ENCODE measurements at regions of chr1 and their contacts with region 1.

Region 1: GRCh38 chr1:200048218-200048617 is 20.7 kb downstream of the NR5A2 start:
- DNase-seq: no peak
- ATAC-seq: no peak
- H3K4me3 ChIP-seq: no peak overlapping the region
- H3K27ac ChIP-seq: no peak overlapping the region
- H3K4me1 ChIP-seq: peaks cover 3% of the 10 kb centered on the region; the same call in 1 of the 2 replicates
- H3K27me3 ChIP-seq: peaks cover 5% of the 10 kb centered on the region; the same call in 1 of the 2 replicates
- CTCF ChIP-seq: no peak

Region 2: GRCh38 chr1:200075938-200076550 is 27.8 kb after region 1 on chr1:
- CTCF ChIA-PET with region 1: interaction called, 3 read pairs
- POLR2A ChIA-PET with region 1: interaction called, 10 read pairs
- in situ Hi-C with region 1: no loop called
- intact Hi-C with region 1: no loop called
- DNase-seq: peak; percentile 71
- ATAC-seq: peak; percentile 98
- H3K4me3 ChIP-seq: peak overlapping the region; percentile 27 to 39
- H3K27ac ChIP-seq: peak overlapping the region; percentile 91
- H3K4me1 ChIP-seq: peaks cover 42% of the 10 kb centered on the region
- H3K27me3 ChIP-seq: no peaks in the 10 kb centered on the region
- CTCF ChIP-seq: no peak